Mammary epithelial cell (primary cell): ENCODE measurements at regions of chr4 and their contacts with region 1.

Region 1: DNA sequence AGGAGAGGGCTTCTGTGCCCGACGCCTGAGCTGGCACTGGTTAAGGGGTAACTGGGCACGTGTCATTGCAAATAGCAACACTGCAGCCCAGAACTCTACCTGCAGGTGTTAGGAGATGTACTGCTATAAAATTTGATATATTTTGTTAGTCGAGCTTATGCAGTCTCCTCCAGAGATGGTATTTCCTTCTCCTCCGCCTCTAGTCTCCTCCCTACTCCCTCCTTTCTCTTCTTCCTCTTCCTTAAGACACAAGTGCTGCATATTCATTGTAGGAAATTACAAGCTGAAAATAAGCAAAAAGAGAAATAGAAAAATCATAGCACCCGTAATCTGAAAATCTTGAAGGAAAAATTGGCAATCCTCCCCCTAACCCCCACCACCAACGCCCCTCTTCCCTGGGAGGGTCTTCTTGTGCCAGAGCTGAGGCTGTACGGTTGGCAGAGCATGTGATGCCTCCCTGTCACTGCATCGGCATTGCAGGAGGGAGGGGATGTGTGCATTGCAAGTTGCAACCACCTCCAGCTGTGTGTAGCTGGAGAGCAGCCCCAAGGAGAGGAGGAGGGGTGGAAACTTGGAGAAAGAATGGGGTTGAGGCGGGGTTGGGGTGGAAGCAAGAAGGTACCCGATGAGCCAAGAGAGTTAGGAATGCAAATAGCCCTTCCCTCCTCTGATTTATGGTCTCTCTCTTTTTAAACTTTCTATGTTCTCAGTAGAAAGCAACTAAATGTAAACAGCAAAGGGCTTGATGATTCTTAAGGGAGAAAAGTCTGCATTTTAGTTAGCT is 48.3 kb upstream of the MND1 start:
- DNase-seq: peak; percentile 39
- H3K4me3 ChIP-seq: peak overlapping the region in 1 of 3 experiments; percentile 19
- H3K27ac ChIP-seq: no peak overlapping the region
- H3K4me1 ChIP-seq: peaks cover 36% of the 10 kb centered on the region
- H3K27me3 ChIP-seq: no peaks in the 10 kb centered on the region
- CTCF ChIP-seq: no peak

Region 2: DNA sequence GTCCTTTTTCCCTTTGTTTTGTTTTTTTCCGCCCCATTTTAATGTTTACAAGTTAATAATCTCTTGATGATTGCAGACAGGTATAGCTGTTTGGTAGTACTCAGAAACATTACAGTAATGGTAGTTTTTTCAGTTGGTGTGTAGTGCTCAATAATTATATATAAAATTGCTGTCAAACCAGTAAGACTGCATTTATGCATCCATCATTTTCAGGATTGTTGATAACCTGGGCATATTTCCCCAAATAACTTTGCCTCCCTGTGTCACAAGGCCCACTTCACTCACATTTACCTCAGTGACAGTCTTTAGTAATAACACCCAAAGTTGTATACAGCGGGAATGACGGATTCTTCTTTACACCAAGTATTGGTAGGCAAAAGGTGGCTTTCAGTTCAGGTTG is 500.3 kb before region 1 on chr4:
- CTCF ChIA-PET with region 1: no interaction called
- dilution Hi-C with region 1: no loop called
- in situ Hi-C with region 1: no loop called
- intact Hi-C with region 1: no loop called
- DNase-seq: no peak
- H3K4me3 ChIP-seq: no peak overlapping the region
- H3K27ac ChIP-seq: no peak overlapping the region
- H3K4me1 ChIP-seq: no peaks in the 10 kb centered on the region
- H3K27me3 ChIP-seq: no peaks in the 10 kb centered on the region
- CTCF ChIP-seq: no peak

Region 3: GRCh38 chr4:153232768-153233167 is 63.5 kb before region 1 on chr4:
- CTCF ChIA-PET with region 1: no interaction called
- dilution Hi-C with region 1: no loop called
- in situ Hi-C with region 1: no loop called
- intact Hi-C with region 1: loop called (anchors 5 kb)
- DNase-seq: peak; percentile 4
- H3K4me3 ChIP-seq: no peak overlapping the region
- H3K27ac ChIP-seq: no peak overlapping the region
- H3K4me1 ChIP-seq: peaks cover 42% of the 10 kb centered on the region
- H3K27me3 ChIP-seq: no peaks in the 10 kb centered on the region
- CTCF ChIP-seq: peak in 1 of 2 donors; percentile 34

Region 4: DNA sequence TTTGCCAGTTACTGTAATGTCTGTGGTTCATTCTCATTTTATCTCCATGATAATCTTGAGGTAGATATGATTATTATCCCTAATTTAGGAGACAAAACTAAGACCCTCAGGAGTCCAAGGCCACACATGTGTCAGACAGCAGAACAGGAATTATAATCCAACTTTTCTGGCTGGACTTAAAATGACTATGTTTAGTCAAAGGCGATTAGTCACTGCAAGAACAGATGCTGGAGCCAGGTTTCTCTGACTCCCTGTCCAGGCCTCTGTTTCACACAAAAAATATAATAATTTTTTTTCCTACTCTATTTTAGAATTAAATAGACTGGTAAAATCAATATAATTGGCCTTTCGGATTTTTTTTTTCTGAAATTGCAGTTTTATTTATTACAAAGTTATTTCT is 113.2 kb after region 1 on chr4:
- CTCF ChIA-PET with region 1: no interaction called
- dilution Hi-C with region 1: no loop called
- in situ Hi-C with region 1: no loop called
- intact Hi-C with region 1: no loop called
- DNase-seq: peak; percentile 32
- H3K4me3 ChIP-seq: no peak overlapping the region
- H3K27ac ChIP-seq: no peak overlapping the region
- H3K4me1 ChIP-seq: no peaks in the 10 kb centered on the region
- H3K27me3 ChIP-seq: no peaks in the 10 kb centered on the region
- CTCF ChIP-seq: no peak

Region 5: DNA sequence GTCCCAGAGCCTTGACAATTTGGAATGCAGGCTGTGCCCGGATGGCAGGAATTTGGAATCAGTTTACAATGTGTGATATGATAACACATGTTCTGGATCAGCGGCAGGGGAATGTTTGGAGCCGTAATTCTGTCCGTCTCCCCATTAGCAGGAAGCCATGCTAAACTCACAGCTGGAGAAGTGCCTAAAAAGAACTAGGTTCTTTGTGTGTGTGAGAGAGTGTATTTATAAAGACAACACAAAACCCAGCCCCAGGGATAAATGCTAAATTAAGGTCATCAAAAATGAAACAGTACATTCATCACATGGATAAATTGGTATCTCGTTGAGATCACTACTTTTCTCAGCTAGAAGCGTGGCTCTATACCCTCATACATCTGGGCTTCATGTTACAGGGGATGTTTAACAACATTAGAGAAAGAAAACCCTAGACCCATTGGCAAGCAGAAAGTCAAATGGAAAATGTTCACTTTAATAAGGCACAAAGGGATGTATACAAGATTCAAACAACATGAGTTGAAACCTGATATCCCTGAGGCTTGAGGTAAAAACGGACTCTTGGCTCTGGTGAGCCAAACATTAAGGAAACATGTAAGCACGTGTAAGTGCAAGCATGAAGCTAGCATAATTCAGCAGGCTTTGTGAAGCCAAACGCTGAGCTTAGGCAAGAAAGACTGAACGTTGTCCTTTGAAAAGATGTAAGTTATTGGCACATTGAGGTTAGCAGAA is 151.9 kb after region 1 on chr4:
- CTCF ChIA-PET with region 1: no interaction called
- dilution Hi-C with region 1: no loop called
- in situ Hi-C with region 1: no loop called
- intact Hi-C with region 1: no loop called
- DNase-seq: no peak
- H3K4me3 ChIP-seq: no peak overlapping the region
- H3K27ac ChIP-seq: no peak overlapping the region
- H3K4me1 ChIP-seq: peaks cover 6% of the 10 kb centered on the region
- H3K27me3 ChIP-seq: no peaks in the 10 kb centered on the region
- CTCF ChIP-seq: no peak